ENCODE measurements at regions of chr11 and their contacts with region 1.

Region 1: DNA sequence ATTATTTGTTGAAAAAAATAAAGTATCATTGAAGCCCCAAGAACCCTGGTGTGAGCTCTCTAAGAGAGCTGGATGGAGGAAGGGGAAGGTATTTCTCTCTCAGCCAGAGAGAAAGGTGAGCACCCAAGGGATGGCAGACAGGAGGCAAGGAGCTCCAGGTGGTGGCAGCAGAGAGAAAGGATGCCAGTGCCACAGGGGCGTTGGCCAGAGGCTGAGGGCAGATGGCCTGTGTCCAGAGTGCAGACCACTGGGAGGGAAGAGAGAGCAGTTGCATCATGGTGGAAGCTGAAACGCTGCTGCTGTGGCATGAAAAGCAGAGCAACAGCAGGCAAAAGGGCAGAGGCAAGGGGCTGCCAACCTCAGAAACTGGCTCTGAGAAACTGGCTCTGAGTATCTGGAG is 8.5 kb downstream of the SPON1 start:
- DNase-seq: peak; percentile 81
- H3K4me3 ChIP-seq: no peak overlapping the region
- H3K27ac ChIP-seq: no peak overlapping the region
- H3K4me1 ChIP-seq: peaks cover 6% of the 10 kb centered on the region
- H3K27me3 ChIP-seq: no peaks in the 10 kb centered on the region
- CTCF ChIP-seq: peak; percentile 48

Region 2: DNA sequence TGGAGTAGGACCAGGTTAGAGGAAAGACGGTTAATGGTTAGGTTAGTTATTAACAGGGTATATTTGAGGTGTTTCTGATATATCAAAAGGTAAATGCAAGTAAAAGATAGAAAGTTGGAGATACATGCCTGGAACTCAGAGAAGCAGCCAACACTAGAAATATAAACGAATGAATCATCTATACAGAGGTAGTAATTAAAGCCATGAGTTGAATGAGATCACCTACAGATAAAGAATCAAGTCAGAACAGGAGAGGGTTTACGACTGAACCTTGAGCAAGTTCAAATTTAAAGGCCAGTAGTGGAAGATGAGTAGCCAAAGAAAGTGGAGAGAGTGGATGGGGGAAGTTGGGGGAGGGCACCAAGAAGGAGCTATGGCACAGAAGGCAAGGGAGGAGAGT is 65.5 kb after region 1 on chr11:
- intact Hi-C with region 1: loop called (anchors 5 kb)
- DNase-seq: no peak
- H3K4me3 ChIP-seq: no peak overlapping the region
- H3K27ac ChIP-seq: no peak overlapping the region
- H3K4me1 ChIP-seq: no peaks in the 10 kb centered on the region
- H3K27me3 ChIP-seq: no peaks in the 10 kb centered on the region
- CTCF ChIP-seq: no peak